HepG2 (cell line): ENCODE measurements at regions of chr20 and their contacts with region 1.

Region 1: DNA sequence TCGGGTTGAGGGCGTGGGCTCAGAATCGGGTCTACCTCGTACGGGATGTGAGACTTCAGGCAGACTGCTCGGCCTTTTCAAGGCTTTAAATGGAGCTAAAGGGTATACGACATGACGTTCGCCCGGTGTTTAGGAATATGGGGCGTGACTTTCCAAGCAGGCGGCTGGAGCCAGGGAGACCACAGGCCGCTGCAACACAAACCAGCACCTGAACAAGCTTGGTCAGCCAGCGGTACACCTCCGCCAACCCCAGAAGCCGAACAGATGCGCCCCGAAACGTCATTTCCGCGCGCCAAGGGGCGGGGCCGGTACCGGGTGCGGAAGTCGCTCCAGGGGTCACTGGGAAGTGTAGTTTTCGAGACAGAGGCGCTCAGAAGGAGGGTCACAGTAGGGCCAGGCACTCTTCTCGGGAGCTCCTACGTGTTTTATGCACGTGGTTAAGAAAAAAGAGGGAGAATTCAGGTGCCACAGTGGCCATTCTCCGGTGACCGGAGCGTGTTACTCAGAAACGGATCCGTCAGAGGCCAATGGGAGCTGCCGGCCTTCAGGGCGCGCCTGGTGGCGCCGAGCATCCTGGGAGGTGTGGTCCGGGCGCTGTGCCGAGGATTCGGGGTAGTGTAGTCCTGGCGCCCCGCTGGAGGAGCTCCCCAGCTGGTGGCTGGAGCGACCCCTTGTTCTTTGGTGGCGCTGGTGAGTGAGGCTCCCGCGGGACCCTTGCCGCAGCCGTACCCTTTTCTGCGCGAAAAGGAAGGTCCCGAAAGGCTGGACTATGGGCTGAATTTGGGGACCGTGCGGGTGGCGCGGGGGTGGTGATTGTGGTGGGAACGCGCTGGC is at the start of gene ZNF133:
- DNase-seq: peak; percentile 96
- ATAC-seq: peak; percentile 98
- H3K4me3 ChIP-seq: peak within 1 kb of the TSS; percentile 76 to 93 (median 85)
- H3K27ac ChIP-seq: peak within 1 kb of the TSS; percentile 87
- H3K4me1 ChIP-seq: peaks cover 20% of the 10 kb centered on the region
- H3K27me3 ChIP-seq: no peaks in the 10 kb centered on the region; a peak in 1 of 5 replicates
- CTCF ChIP-seq: peak; percentile 75
- EP300 ChIP-seq: peak; percentile 11 to 23; a peak in 1 of 4 replicates
- POLR2A ChIP-seq: peak; percentile 97
- RAD21 ChIP-seq: peak; percentile 48; the same call in 1 of the 2 replicates
- total RNA-seq, gene ZNF133: 25.9 and 26.7 TPM in 2 replicates

Region 2: GRCh38 chr20:17504898-17505635 is 783.1 kb before region 1 on chr20:
- CTCF ChIA-PET with region 1: no interaction called
- POLR2A ChIA-PET with region 1: interaction called, 6 read pairs
- in situ Hi-C with region 1: loop called (anchors 25 kb)
- intact Hi-C with region 1: no loop called
- DNase-seq: peak; percentile 64
- ATAC-seq: peak; percentile 86
- H3K4me3 ChIP-seq: peak overlapping the region; percentile 35 to 74 (median 51)
- H3K27ac ChIP-seq: no peak overlapping the region
- H3K4me1 ChIP-seq: peaks cover 19% of the 10 kb centered on the region
- H3K27me3 ChIP-seq: peaks cover 1 to 74% of the 10 kb centered on the region in 2 experiments; a peak in 4 of 5 replicates
- CTCF ChIP-seq: peak; percentile 79
- EP300 ChIP-seq: no peak
- POLR2A ChIP-seq: no peak
- RAD21 ChIP-seq: peak; percentile 69

Region 3: DNA sequence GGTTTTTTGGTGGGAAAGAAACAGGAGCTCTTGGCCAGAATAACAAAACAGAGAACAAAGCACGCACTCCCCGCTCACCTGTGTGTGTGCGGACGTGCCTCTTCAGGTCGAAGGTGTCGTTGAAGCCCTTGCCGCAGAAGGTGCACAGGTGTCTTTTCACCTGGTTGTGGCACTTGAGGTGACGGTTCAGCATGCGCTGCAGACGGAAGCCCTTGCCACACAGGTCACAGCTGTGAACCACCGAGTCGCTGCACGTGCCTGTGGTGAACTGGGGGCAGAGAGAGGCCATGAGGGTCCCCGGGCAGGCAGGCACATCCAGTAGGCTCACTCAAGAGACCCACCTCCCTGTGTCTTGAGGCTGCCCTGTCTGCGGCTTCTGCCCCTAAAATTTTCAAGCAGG is 246.7 kb before region 1 on chr20:
- CTCF ChIA-PET with region 1: no interaction called
- POLR2A ChIA-PET with region 1: no interaction called
- in situ Hi-C with region 1: no loop called
- intact Hi-C with region 1: no loop called
- DNase-seq: no peak
- ATAC-seq: no peak
- H3K4me3 ChIP-seq: no peak overlapping the region
- H3K27ac ChIP-seq: no peak overlapping the region
- H3K4me1 ChIP-seq: no peaks in the 10 kb centered on the region
- H3K27me3 ChIP-seq: peaks cover 0 to 49% of the 10 kb centered on the region in 2 experiments; a peak in 4 of 5 replicates
- CTCF ChIP-seq: no peak
- EP300 ChIP-seq: no peak
- POLR2A ChIP-seq: no peak
- RAD21 ChIP-seq: no peak

Region 4: DNA sequence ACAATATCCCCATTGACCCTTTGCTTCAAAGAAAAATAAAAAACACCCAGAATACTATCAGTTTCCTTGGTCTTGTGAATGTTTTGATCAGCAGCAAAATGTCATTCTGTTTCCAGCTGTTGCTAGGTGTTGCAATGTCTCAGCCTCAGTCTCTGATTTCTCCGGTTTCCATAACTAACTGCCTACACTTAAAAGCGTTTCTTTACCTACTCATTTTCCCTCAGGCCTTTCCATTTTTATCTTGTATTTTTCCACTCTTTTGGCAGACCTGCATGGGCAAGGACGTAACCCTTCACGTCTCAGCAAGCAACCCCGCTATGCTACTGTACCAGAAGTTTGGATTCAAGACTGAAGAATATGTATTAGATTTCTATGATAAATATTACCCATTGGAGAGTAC is 101.1 kb before region 1 on chr20:
- CTCF ChIA-PET with region 1: no interaction called
- POLR2A ChIA-PET with region 1: no interaction called
- in situ Hi-C with region 1: no loop called
- intact Hi-C with region 1: no loop called
- DNase-seq: no peak
- ATAC-seq: no peak
- H3K4me3 ChIP-seq: no peak overlapping the region
- H3K27ac ChIP-seq: no peak overlapping the region
- H3K4me1 ChIP-seq: peaks cover 7% of the 10 kb centered on the region
- H3K27me3 ChIP-seq: no peaks in the 10 kb centered on the region
- CTCF ChIP-seq: no peak
- EP300 ChIP-seq: no peak
- POLR2A ChIP-seq: no peak
- RAD21 ChIP-seq: no peak

Region 5: GRCh38 chr20:18276821-18277220 is 11.3 kb before region 1 on chr20:
- CTCF ChIA-PET with region 1: no interaction called
- POLR2A ChIA-PET with region 1: interaction called, 20 read pairs
- in situ Hi-C with region 1: no loop called
- intact Hi-C with region 1: no loop called
- DNase-seq: peak; percentile 75
- ATAC-seq: peak; percentile 95
- H3K4me3 ChIP-seq: no peak overlapping the region
- H3K27ac ChIP-seq: no peak overlapping the region
- H3K4me1 ChIP-seq: peaks cover 10% of the 10 kb centered on the region
- H3K27me3 ChIP-seq: peaks cover 0 to 18% of the 10 kb centered on the region in 2 experiments; a peak in 1 of 5 replicates
- CTCF ChIP-seq: peak; percentile 98
- EP300 ChIP-seq: no peak
- POLR2A ChIP-seq: no peak
- RAD21 ChIP-seq: peak; percentile 92

Region 6: DNA sequence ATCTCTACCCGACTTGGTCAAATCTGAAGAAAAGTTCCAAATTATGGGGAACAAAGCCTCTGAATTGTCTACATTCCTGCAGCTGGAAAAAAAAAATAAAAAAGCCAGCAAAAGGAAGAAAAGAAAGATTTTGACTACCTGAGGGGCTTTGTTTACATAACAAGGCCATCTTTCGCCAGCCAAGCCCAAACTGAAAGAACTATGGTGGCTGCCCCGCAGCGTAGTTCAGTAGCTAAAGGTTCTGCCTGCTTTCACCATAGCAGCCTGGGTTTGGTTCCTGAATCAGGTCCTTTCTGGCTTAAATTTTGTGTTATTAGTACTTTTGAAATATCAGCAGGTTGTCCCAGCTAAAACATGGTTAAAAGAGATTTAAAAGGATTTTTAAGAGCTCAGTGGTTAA is 35.6 kb after region 1 on chr20:
- CTCF ChIA-PET with region 1: no interaction called
- POLR2A ChIA-PET with region 1: interaction called, 14 read pairs
- in situ Hi-C with region 1: no loop called
- intact Hi-C with region 1: loop called (anchors 2 kb)
- DNase-seq: no peak
- ATAC-seq: no peak
- H3K4me3 ChIP-seq: no peak overlapping the region
- H3K27ac ChIP-seq: peak overlapping the region; percentile 74
- H3K4me1 ChIP-seq: peaks cover 42% of the 10 kb centered on the region
- H3K27me3 ChIP-seq: no peaks in the 10 kb centered on the region
- CTCF ChIP-seq: no peak
- EP300 ChIP-seq: no peak
- POLR2A ChIP-seq: no peak
- RAD21 ChIP-seq: no peak

Region 7: DNA sequence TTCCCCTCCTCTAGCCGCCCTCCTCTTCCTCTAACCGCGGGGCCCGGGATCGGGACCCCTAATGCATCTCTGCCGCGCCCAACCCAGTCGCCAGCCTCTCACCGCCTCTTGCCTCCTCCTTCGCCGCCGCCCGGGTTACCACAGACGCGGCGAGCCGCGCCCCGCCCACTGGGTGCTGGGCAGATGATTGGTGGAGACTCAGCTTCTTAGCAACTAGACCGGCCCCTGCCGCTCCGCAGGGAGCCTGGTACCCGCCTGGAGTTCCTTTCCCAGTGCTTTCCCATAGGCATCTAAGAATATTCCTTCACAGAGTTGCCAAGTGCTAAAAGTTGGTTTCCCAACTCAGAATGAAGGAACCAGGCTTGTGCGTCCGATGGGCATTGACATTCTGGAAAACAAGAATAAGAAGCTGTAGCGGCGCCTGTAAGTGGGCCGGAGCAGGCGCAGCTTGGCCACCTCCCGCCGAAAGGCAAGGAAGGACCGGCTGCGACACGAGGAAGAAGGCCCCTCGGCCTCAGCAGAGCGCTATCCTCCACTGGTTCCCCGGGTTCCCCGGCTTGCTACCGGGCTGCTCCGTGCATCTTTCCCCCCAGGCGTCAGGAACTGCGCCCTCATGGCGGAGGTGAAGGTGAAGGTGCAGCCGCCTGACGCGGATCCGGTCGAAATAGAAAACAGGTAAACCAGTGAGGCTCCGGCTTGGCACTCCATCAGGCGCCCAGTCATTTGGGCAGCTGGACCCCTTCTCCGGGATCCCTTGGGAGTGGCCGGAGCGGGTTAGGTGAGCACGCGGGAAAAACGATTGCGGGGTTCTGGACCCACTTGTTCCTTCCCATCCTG is 179.0 kb after region 1 on chr20 and contains the starts of genes DZANK1 and POLR3F:
- CTCF ChIA-PET with region 1: no interaction called
- POLR2A ChIA-PET with region 1: interaction called, 21 read pairs
- in situ Hi-C with region 1: no loop called
- intact Hi-C with region 1: loop called (anchors 1 kb)
- DNase-seq: peak; percentile 97
- ATAC-seq: peak; percentile 99
- H3K4me3 ChIP-seq: peak within 1 kb of the TSS; percentile 79 to 91 (median 83)
- H3K27ac ChIP-seq: peak within 1 kb of the TSS; percentile 88
- H3K4me1 ChIP-seq: peaks cover 27% of the 10 kb centered on the region
- H3K27me3 ChIP-seq: no peaks in the 10 kb centered on the region; a peak in 1 of 5 replicates
- CTCF ChIP-seq: peak; percentile 27
- EP300 ChIP-seq: 0 out of 4 replicates have a peak, but pooled peaks of 1 of the 2 experiments have one; percentile 21
- POLR2A ChIP-seq: peak; percentile 83 to 96
- RAD21 ChIP-seq: peak; percentile 53; the same call in 1 of the 2 replicates
- total RNA-seq, gene DZANK1: 1.4 and 1.6 TPM in 2 replicates
- total RNA-seq, gene POLR3F: 25.5 and 31.2 TPM in 2 replicates

Region 8: GRCh38 chr20:18507218-18508021 is 219.3 kb after region 1 on chr20 and contains the start of gene SEC23B:
- CTCF ChIA-PET with region 1: no interaction called
- POLR2A ChIA-PET with region 1: interaction called, 40 read pairs
- in situ Hi-C with region 1: no loop called
- intact Hi-C with region 1: loop called (anchors 2 kb)
- DNase-seq: peak; percentile 99
- ATAC-seq: peak; percentile 98
- H3K4me3 ChIP-seq: peak within 1 kb of the TSS; percentile 76 to 88 (median 87)
- H3K27ac ChIP-seq: peak within 1 kb of the TSS; percentile 95
- H3K4me1 ChIP-seq: peaks cover 44% of the 10 kb centered on the region
- H3K27me3 ChIP-seq: no peaks in the 10 kb centered on the region; a peak in 1 of 5 replicates
- CTCF ChIP-seq: no peak
- EP300 ChIP-seq: no peak; a peak in 1 of 4 replicates
- POLR2A ChIP-seq: peak; percentile 90 to 95
- RAD21 ChIP-seq: 0 out of 2 replicates have a peak, but pooled peaks have one; percentile 12
- total RNA-seq, gene SEC23B: 120 and 178 TPM in 2 replicates